CD4-positive, alpha-beta memory T cell (primary cell): ENCODE measurements at regions of chr17 and their contacts with region 1.

Region 1: DNA sequence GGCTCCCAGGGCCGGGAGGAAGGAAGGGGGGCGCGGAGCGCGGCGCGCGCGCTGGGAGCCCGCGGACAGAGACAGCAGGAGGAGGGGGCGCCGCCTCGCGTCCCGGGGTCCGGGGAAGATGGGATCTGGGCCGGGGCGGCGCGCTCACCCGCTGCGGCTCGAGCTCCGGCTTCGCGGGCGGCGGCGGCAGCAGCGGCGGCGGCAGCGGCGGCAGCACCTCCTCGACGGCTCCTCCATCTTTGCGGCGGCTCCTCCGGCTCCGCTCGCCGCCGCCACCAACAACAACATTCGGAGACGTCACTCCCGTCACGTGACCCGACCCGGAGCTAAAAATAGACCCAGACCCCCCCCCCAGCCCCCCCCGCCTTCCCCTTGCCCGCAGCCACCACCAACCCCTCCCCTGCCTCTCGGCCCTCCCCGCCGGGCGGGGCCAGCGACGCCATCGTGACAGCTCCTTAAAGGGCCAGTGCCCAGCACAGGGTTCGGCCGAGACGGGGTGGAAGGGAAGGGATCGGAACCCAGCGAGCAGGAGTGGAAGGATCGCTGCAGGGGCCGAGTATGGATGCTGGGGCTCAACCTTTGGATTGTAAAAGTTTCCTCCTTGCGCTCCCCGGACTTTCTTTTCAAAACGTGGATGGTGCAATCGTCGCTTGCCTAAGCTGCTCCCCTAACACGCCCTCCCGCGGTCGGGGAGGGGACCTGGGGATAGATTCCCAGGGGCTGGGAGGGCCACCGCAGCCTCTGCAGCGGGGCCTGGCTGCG is at the start of gene HDAC5:
- DNase-seq: peak; percentile 93 to 95 (median 94)
- H3K4me3 ChIP-seq: peak within 1 kb of the TSS; percentile 78 to 93
- H3K4me3 Mint-ChIP-seq: peak within 1 kb of the TSS; percentile 94 to 98 (median 95)
- H3K27ac ChIP-seq: peak within 1 kb of the TSS; percentile 67
- H3K27ac Mint-ChIP-seq: peak within 1 kb of the TSS; percentile 94 to 98 (median 97)
- H3K4me1 ChIP-seq: peaks cover 30% of the 10 kb centered on the region
- H3K4me1 Mint-ChIP-seq: peaks cover 25 to 51% (median 38%) of the 10 kb centered on the region in 4 donors
- H3K27me3 ChIP-seq: no peaks in the 10 kb centered on the region
- H3K27me3 Mint-ChIP-seq: no peaks in the 10 kb centered on the region
- total RNA-seq, gene HDAC5: 71.4 to 74.2 TPM

Region 2: DNA sequence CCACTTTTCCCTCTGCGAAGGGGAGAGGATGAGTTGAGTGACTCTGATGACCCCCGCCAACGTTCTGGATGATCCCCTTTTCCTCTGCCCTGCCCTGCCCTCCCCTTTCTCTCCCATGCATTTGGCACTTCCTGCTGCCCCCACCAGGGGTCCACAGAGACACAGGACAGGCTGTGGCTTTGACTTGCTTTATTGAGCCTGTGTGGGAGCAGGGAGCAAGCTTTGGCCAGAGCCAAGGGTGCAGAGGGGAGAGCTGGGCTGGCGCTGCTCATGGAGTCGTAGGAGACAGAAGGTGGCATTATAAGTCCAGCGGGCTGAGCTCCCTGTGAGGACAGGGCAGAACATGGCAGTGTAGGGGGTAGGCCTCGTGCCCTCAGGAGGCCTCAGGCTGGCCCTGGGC is 182.9 kb before region 1 on chr17:
- CTCF ChIA-PET with region 1: no interaction called
- POLR2A ChIA-PET with region 1: no interaction called
- intact Hi-C with region 1: loop called (anchors 5 kb)
- DNase-seq: no peak
- H3K4me3 ChIP-seq: no peak overlapping the region
- H3K4me3 Mint-ChIP-seq: no peak overlapping the region
- H3K27ac ChIP-seq: no peak overlapping the region
- H3K27ac Mint-ChIP-seq: no peak overlapping the region
- H3K4me1 ChIP-seq: peaks cover 4% of the 10 kb centered on the region
- H3K4me1 Mint-ChIP-seq: peaks cover 1 to 9% (median 4%) of the 10 kb centered on the region in 4 donors
- H3K27me3 ChIP-seq: no peaks in the 10 kb centered on the region
- H3K27me3 Mint-ChIP-seq: peaks cover 4 to 7% of the 10 kb centered on the region in 2 donors

Region 3: DNA sequence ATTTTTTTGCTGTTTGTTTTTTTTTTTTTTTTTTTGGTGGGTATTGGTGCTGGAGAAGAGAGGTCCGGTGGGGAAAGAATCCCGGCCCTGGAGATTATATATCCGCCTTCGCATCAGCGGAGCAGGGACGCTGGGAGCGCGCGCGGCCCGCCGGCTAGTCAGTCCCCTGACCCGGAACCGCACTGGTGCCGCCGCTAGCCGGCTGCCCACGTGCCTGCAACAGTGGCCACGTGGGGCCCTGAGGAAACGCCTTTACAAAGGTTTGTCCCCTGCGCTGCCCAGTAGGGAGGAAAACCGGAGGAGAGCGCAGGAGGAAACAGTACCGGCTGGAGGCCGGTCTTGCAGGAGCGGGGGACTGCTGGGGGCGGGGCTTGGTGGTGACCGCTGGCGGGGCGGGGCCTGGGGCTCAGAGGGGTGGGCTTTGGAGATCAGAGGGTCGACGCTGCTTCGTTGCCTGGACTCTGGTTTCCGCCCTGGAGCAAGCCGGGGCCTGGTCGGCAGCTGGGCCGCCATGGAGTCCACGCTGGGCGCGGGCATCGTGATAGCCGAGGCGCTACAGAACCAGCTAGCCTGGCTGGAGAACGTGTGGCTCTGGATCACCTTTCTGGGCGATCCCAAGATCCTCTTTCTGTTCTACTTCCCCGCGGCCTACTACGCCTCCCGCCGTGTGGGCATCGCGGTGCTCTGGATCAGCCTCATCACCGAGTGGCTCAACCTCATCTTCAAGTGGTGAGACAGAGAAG is 52.9 kb before region 1 on chr17 and contains the start of gene G6PC3:
- CTCF ChIA-PET with region 1: no interaction called
- POLR2A ChIA-PET with region 1: interaction called, 16 read pairs
- intact Hi-C with region 1: loop called (anchors 1 kb)
- DNase-seq: peak; percentile 56 to 76 (median 64)
- H3K4me3 ChIP-seq: peak within 1 kb of the TSS; percentile 69 to 79
- H3K4me3 Mint-ChIP-seq: peak within 1 kb of the TSS; percentile 90 to 97 (median 94)
- H3K27ac ChIP-seq: peak within 1 kb of the TSS; percentile 78
- H3K27ac Mint-ChIP-seq: peak within 1 kb of the TSS; percentile 83 to 98 (median 96)
- H3K4me1 ChIP-seq: peaks cover 33% of the 10 kb centered on the region
- H3K4me1 Mint-ChIP-seq: peaks cover 22 to 50% (median 34%) of the 10 kb centered on the region in 4 donors
- H3K27me3 ChIP-seq: no peaks in the 10 kb centered on the region
- H3K27me3 Mint-ChIP-seq: no peaks in the 10 kb centered on the region
- total RNA-seq, gene G6PC3: 10.6 to 11.8 TPM

Region 4: DNA sequence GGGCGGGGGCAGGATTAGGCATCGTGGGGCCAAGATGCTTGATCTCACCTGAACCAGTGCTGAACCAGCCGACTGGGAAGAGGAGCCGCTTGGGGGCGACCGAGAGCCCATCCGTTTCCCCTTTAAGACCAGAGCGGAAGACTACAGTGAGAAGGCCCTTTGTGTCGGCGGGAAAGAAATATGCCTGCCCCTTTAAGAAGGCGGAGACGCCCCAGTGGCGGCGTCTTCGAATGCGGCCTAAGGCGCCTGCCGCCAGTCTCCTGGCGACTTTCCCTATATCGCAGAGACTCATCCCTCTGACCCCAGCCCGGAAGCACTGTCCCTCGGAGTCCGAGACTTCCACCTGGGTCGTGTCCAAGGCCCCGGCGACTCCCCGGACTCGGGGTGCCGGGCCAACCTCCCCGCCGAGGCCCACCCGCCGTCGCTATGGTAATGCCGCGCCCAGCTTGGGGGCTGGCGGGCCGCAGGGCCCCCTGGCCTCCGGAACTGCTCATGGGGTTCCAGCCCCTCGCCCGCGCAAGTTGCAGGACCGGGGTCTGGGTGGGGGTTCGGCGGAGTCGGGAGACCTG is 18.3 kb after region 1 on chr17 and contains the start of gene HROB:
- CTCF ChIA-PET with region 1: interaction called, 16 read pairs
- POLR2A ChIA-PET with region 1: interaction called, 11 read pairs
- intact Hi-C with region 1: loop called (anchors 1 kb)
- DNase-seq: peak; percentile 96 to 99 (median 97)
- H3K4me3 ChIP-seq: peak within 1 kb of the TSS; percentile 66 to 69
- H3K4me3 Mint-ChIP-seq: peak within 1 kb of the TSS; percentile 77 to 94 (median 84)
- H3K27ac ChIP-seq: peak within 1 kb of the TSS; percentile 79
- H3K27ac Mint-ChIP-seq: peak within 1 kb of the TSS; percentile 88 to 95 (median 90)
- H3K4me1 ChIP-seq: peaks cover 14% of the 10 kb centered on the region
- H3K4me1 Mint-ChIP-seq: peaks cover 2 to 19% (median 10%) of the 10 kb centered on the region in 4 donors
- H3K27me3 ChIP-seq: no peaks in the 10 kb centered on the region
- H3K27me3 Mint-ChIP-seq: peaks cover 7% of the 10 kb centered on the region in 2 donors
- total RNA-seq, gene HROB: 0.36 to 0.64 TPM

Region 5: GRCh38 chr17:44218344-44219107 is 95.0 kb after region 1 on chr17:
- CTCF ChIA-PET with region 1: interaction called, 3 read pairs
- POLR2A ChIA-PET with region 1: interaction called, 29 read pairs
- intact Hi-C with region 1: loop called (anchors 1 kb)
- DNase-seq: peak; percentile 85 to 92 (median 90)
- H3K4me3 ChIP-seq: peak overlapping the region; percentile 37 to 50
- H3K4me3 Mint-ChIP-seq: peak overlapping the region; percentile 68 to 93 (median 83)
- H3K27ac ChIP-seq: peak overlapping the region; percentile 71
- H3K27ac Mint-ChIP-seq: peak overlapping the region; percentile 15 to 95 (median 91)
- H3K4me1 ChIP-seq: peaks cover 60% of the 10 kb centered on the region
- H3K4me1 Mint-ChIP-seq: peaks cover 39 to 68% (median 51%) of the 10 kb centered on the region in 4 donors
- H3K27me3 ChIP-seq: no peaks in the 10 kb centered on the region
- H3K27me3 Mint-ChIP-seq: no peaks in the 10 kb centered on the region

Region 6: DNA sequence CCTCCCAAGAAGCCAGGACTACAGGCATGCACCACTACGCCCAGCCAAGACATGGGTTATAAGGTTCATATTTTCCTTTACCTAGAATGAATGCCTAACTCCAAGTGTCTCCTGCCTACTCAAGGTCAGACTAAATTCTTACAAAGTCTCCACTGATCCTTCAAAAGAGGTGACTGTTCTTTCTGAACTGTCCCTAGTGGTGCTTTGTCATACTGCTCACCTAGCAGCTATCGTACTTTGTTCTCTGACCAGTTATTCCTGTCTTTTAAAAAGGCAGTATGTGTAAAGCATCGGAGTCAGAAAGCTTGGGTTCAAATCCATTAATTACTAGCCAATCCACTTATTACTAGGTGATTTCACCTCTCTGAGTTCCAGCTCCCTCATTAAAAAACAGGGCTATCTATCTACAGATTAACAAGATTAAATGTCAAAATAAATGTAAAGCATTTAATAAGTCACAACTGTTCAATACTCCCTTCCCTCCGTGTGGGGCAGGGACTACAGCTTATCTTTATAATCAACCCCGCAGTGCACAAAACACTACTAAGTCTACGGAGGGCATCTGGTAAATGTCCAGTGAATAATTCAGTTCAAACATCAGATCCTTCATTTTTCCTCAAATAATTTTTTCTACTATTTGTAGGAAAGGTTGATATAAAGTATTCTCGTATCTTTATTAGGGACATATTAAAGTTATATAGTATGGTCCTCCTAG is 285.9 kb after region 1 on chr17:
- CTCF ChIA-PET with region 1: no interaction called
- POLR2A ChIA-PET with region 1: no interaction called
- intact Hi-C with region 1: no loop called
- DNase-seq: no peak
- H3K4me3 ChIP-seq: no peak overlapping the region
- H3K4me3 Mint-ChIP-seq: no peak overlapping the region
- H3K27ac ChIP-seq: no peak overlapping the region
- H3K27ac Mint-ChIP-seq: no peak overlapping the region
- H3K4me1 ChIP-seq: no peaks in the 10 kb centered on the region
- H3K4me1 Mint-ChIP-seq: peaks cover 0 to 8% (median 2%) of the 10 kb centered on the region in 4 donors
- H3K27me3 ChIP-seq: no peaks in the 10 kb centered on the region
- H3K27me3 Mint-ChIP-seq: no peaks in the 10 kb centered on the region

Region 7: GRCh38 chr17:44522883-44523671 is 399.5 kb after region 1 on chr17:
- CTCF ChIA-PET with region 1: no interaction called
- POLR2A ChIA-PET with region 1: no interaction called
- intact Hi-C with region 1: no loop called
- DNase-seq: peak in 2 of 5 donors; percentile 5 to 16
- H3K4me3 ChIP-seq: no peak overlapping the region
- H3K4me3 Mint-ChIP-seq: no peak overlapping the region
- H3K27ac ChIP-seq: no peak overlapping the region
- H3K27ac Mint-ChIP-seq: no peak overlapping the region
- H3K4me1 ChIP-seq: no peaks in the 10 kb centered on the region
- H3K4me1 Mint-ChIP-seq: no peaks in the 10 kb centered on the region
- H3K27me3 ChIP-seq: no peaks in the 10 kb centered on the region
- H3K27me3 Mint-ChIP-seq: peaks cover 12 to 13% of the 10 kb centered on the region in 2 donors

Region 8: DNA sequence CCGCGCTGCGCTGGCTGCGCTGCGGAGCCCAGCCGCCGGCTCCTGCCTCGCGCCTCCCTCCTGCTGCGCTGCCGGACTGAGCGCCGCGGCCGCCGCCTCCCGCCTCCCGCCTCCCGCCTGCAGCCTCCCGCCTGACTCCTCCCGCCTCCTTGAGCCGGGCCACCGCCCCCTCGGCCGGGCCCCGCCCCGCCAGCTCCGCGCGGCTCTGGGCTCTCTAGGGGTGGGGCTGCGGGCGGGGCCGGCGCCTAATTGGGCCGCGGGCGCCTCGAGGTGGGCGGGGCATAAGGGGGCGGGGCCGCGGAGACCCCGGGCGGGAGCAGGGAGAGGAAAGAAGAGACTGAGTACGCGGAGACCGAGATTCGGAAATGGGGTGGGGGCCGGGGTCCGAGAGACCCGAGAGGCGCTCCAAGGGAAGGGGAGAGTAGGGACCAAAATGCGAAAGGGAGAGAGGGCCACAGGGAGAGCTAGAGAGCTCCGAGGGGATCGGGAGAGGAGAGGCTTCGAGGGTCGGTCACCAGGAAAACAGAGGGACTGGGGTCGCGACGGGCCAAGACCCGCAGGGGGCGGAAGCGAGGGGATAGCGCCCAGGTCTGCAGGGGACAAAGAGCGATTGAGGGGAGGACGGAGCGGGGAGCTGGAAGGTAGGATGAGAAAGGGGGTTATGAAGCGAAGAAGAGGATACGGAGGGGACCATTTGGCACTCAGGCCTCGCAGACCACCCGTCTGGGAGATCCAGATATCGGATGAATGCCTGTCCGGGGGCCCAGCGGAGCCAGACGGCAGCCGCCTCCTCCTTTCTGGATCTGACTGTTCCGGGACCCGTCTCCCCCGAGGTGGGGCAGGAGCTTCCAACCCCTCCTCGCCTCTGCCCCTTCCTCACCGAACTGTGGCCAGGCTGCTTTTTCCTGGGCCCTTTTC is 844.9 kb after region 1 on chr17 and contains the start of gene C1QL1:
- CTCF ChIA-PET with region 1: no interaction called
- POLR2A ChIA-PET with region 1: no interaction called
- intact Hi-C with region 1: loop called (anchors 10 kb)
- DNase-seq: peak; percentile 71 to 79 (median 73)
- H3K4me3 ChIP-seq: peak within 1 kb of the TSS; percentile 47 to 55
- H3K4me3 Mint-ChIP-seq: peak within 1 kb of the TSS; percentile 64 to 90 (median 76)
- H3K27ac ChIP-seq: no peak within 1 kb of the TSS
- H3K27ac Mint-ChIP-seq: peak within 1 kb of the TSS in 3 of 7 donors; percentile 35 to 54 (median 38)
- H3K4me1 ChIP-seq: peaks cover 28% of the 10 kb centered on the region
- H3K4me1 Mint-ChIP-seq: peaks cover 12 to 42% (median 24%) of the 10 kb centered on the region in 4 donors
- H3K27me3 ChIP-seq: peaks cover 37% of the 10 kb centered on the region
- H3K27me3 Mint-ChIP-seq: peaks cover 22 to 48% of the 10 kb centered on the region in 2 donors
- total RNA-seq, gene C1QL1: not detected